ENCODE measurements at regions of chr1 and their contacts with region 1.

Region 1: DNA sequence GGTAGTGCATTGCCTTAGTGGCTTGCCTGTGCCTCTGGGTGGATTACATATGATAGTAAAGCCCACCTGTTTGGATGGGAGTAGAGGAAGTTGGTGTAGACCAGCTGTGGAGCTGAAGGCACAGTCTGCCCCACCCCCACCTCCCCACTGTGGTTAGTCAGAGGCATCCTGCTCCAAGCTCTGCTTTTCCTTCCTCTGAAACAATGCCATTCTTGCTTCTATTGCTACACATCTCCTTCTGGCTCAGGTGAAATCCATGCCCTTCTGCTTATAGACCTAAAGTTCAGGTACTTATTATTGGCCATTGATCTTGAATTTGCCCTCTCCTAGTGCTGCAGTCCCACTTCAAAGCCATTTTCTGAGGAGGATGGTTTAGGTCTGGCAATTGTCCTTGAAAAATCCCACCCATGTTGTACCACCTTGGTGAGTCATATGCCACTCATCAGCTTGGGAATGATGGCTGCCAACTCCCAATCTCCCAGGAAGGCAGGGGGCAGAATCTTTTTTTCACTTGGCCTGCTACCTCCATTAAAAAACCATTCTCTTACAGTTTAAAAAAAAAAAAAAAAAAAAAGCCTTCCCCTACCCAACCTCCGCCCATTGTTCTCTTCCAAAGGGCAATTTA is 6.7 kb upstream of the TXLNA start:
- DNase-seq: no peak

Region 2: DNA sequence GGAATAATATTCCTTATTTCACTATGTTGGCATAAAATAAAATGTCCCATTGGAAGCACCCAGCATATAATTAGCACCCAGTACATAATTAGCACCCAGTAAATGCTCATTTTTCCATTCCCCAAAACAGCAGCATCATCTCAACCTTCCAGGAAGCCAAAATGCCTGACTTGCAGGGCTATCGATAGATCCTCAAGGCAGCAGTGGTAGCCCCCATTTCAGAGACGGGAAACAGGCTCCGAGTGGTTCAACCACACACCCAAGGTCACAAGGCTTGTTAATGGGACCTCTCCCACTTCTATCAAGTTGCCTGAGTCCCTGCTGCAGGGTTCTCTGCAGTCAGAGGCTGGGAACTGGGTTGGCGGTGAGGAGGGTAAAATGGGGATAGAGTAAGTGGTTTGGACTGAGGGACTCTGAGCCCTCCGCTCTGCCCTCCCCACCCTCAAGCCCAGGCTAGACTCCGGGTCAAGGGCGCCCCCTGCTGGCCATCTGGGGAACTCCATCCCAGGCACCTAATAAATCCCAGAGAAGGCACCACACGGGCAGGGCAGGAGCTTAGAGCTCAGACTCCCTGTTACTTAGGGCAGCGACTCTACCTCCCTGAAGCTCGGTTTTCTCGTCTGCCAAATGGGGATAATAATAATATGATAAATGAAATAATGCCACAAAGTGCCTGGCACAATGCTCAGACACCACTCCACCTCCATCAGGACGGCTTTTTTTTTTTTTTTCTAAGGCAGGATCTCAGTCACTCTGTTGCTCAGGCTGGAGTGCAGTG is 1393.2 kb before region 1 on chr1:
- intact Hi-C with region 1: no loop called
- DNase-seq: peak; percentile 95

Region 3: GRCh38 chr1:31095298-31095981 is 1077.3 kb before region 1 on chr1:
- intact Hi-C with region 1: no loop called
- DNase-seq: peak; percentile 50

Region 4: GRCh38 chr1:32142446-32143301 is 30.1 kb before region 1 on chr1:
- intact Hi-C with region 1: loop called in 1 of 2 experiments (anchors 1 kb)
- DNase-seq: no peak

Region 5: DNA sequence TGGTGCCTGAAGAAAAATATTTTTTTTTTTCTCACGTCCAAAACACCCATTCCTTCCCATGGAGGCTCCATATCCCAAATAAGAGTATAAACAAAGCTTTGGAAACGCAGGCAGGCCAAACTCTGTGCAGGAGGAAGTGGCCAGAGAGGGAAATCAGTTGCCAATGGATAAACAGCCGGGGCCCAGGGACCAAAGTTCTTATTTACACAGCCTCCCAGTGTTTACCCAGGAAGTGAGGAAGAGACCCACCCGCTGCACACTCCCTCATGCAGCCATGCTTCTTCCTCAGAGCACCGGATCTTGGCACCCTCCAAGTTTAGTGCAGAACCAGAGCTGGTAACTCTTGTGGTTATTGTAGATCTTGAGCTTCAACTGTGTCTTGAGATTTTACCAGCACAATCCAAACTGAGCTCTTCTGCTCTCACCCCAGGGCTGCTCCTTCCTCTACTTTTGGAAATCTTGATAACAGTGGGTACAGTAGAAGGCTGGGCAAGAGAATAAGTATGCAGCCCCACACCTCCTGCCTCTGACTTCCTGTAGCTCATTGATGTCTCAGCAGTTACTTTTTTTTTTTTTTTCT is 149.1 kb after region 1 on chr1:
- intact Hi-C with region 1: no loop called
- DNase-seq: peak; percentile 34

Region 6: GRCh38 chr1:33086384-33086850 is 913.7 kb after region 1 on chr1:
- intact Hi-C with region 1: no loop called
- DNase-seq: peak; percentile 91